Prostate gland (tissue), 2 donors: ENCODE measurements at regions of chr5 and their contacts with region 1.

Region 1: GRCh38 chr5:38467353-38468040 is 88.9 kb downstream of the LIFR start:
- DNase-seq: no peak
- H3K4me3 ChIP-seq: no peak overlapping the region
- H3K27ac ChIP-seq: peak overlapping the region; percentile 58 to 59
- H3K4me1 ChIP-seq: no peaks in the 10 kb centered on the region
- H3K27me3 ChIP-seq: no peaks in the 10 kb centered on the region
- CTCF ChIP-seq: no peak
- POLR2A ChIP-seq: no peak

Region 2: GRCh38 chr5:38551030-38552017 is 83.8 kb after region 1 on chr5:
- intact Hi-C with region 1: loop called (anchors 5 kb)
- DNase-seq: no peak
- H3K4me3 ChIP-seq: no peak overlapping the region
- H3K27ac ChIP-seq: peak overlapping the region in 1 of 2 donors; percentile 11
- H3K4me1 ChIP-seq: no peaks in the 10 kb centered on the region
- H3K27me3 ChIP-seq: no peaks in the 10 kb centered on the region
- CTCF ChIP-seq: peak in 3 of 4 experiments; percentile 38 to 43 (median 41)
- POLR2A ChIP-seq: no peak